ENCODE measurements at regions of chr11 and their contacts with region 1.

Region 1: GRCh38 chr11:120303004-120303637 is 22.0 kb upstream of the TLCD5 start:
- DNase-seq: peak in 1 of 2 experiments; percentile 67
- H3K4me3 ChIP-seq: no peak overlapping the region
- H3K27ac ChIP-seq: peak overlapping the region; percentile 77
- H3K4me1 ChIP-seq: peaks cover 78% of the 10 kb centered on the region
- H3K27me3 ChIP-seq: no peaks in the 10 kb centered on the region
- CTCF ChIP-seq: peak; percentile 87

Region 2: DNA sequence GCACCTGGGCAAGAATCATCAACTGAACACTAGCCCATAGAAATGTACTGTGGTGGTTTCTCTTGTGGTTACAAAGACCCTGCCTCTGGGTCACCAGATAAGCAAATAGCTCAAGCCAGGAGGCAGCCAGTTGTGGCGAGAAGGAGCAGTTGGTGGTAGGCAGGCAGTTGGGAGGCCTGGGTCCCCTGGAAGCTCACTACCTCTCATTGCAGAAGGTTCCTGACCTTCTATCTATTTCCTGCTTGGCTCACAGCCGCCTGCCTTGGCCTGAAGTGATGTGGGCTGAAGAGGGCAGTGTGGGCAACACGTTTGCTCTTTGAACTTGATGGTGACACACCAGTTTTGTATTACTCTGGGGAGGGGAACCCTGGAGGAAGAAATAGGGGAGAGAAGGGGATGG is 608.8 kb before region 1 on chr11:
- CTCF ChIA-PET with region 1: no interaction called
- POLR2A ChIA-PET with region 1: no interaction called
- intact Hi-C with region 1: loop called (anchors 10 kb)
- DNase-seq: peak; percentile 27 to 70
- H3K4me3 ChIP-seq: no peak overlapping the region
- H3K27ac ChIP-seq: peak overlapping the region; percentile 38; the same call in 1 of the 2 replicates
- H3K4me1 ChIP-seq: peaks cover 66% of the 10 kb centered on the region
- H3K27me3 ChIP-seq: no peaks in the 10 kb centered on the region
- CTCF ChIP-seq: peak; percentile 43; the same call in 1 of the 2 replicates

Region 3: DNA sequence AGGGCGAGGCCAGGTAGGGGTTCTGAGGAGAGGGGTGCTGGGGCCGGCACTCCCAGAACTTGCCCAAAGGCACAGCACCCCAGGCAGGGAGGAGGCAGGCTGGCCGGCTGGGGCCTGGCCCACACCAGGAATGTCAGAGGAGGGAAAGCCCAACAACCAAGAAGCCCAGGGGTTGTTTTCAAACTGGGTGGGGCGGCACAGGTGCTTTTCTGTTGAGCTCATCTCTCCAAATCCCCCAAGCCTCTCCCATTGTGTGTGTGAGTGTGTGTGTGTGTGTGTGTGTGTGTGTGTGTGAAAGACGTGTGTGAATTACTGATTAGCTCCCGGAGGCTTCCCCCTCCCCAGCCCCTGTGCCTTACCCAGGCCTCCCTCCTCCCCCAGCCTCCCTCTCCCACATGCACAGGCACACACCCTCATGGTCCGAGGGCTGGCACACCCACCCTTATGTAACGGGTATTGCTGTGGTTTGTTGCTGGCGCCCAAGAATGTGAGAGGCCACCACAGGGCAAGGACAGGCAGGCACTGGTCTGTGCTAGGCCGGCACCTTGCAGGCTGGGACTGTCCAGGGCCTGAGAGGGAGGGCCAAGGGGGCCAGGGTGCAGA is 181.1 kb before region 1 on chr11:
- CTCF ChIA-PET with region 1: no interaction called
- POLR2A ChIA-PET with region 1: interaction called, 5 read pairs
- intact Hi-C with region 1: loop called (anchors 1 kb)
- DNase-seq: peak; percentile 91 to 98
- H3K4me3 ChIP-seq: peak overlapping the region; percentile 47
- H3K27ac ChIP-seq: peak overlapping the region; percentile 98
- H3K4me1 ChIP-seq: peaks cover 61% of the 10 kb centered on the region
- H3K27me3 ChIP-seq: no peaks in the 10 kb centered on the region
- CTCF ChIP-seq: no peak

Region 4: DNA sequence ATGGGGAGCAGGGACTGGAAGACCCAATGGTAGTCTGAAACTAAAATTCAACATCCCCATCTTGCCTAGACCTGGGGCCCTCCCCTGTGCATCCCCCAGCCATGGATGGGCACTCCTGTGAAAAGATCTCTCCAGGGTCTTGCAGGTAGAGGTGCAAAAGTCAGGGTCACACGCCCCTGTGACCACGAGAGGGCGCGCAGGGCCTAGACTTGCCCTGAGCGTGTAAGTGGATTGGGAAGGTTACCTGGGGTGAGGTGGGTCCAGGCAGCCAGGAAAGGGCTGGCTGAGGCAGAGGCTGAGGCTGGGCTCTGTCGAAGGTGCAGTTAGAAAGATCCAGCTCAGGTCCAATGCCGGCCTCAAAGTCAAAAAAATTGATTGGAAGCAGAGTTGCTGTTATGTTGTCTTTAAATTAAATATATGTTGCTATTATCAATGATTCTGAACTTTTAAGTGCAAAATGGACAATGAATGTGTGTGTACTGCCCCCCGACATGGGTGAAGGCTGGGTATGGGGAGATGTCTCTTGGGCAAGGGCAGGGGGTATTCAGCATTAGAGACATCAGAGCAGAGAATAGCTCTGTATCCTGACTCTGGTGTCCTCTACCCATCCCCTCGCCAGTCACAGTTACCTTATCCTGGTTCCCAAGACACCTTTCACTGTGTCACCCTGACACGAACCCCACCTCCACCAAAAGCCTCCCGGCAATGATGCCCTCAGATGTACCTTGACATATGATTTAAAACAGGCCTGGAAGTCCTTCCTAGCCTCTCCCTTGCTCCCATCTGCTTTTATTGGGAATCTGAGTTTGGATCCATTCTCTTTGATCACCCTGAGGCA is 67.9 kb before region 1 on chr11:
- CTCF ChIA-PET with region 1: interaction called, 22 read pairs
- POLR2A ChIA-PET with region 1: interaction called, 4 read pairs
- intact Hi-C with region 1: loop called (anchors 1 kb)
- DNase-seq: peak; percentile 70 to 77
- H3K4me3 ChIP-seq: no peak overlapping the region
- H3K27ac ChIP-seq: no peak overlapping the region
- H3K4me1 ChIP-seq: peaks cover 15% of the 10 kb centered on the region
- H3K27me3 ChIP-seq: peaks cover 4% of the 10 kb centered on the region; the same call in 1 of the 2 replicates
- CTCF ChIP-seq: peak; percentile 97

Region 5: DNA sequence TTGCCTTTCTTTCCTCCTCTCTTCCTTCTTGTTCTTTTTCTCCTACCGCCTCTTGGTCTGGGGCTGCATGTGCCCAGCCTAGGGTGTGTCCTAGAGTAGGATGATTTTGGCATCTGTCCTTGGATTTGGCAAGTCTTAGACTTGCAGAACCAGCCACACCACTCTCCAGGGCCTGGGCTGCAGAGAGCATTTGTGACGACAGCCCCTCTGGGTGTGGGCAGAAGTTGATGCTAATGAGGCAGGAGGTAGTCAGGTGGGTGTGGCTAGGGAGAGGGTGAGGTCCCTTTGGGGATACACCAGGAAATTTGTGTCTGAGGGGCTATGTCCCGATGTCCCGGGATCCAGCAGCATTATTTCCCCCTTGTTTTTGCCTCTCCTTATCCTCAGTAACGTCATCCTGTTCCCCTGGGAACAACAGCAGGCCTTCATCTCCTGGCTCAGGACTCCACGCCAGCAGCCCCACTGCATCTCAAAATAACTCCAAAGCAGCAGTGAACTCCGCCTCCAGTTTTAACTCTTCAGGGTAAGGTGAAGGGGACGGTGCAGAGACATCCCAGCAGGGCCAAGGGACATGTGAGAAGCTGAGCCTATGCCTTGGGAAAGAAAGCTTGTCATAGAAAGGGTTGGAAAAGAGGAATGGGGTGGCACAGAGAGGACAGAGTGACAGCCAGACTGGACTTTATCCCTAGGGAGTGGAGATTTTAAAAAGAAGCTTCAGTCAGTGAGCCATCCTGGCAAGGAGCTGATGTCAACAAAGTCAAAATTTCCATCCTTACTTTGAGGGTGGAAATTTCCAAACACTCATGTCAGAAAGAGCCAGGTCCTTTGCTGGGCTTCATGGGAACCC is 13.9 kb after region 1 on chr11:
- CTCF ChIA-PET with region 1: interaction called, 5 read pairs
- POLR2A ChIA-PET with region 1: no interaction called
- intact Hi-C with region 1: loop called (anchors 2 kb)
- DNase-seq: peak; percentile 87 to 97
- H3K4me3 ChIP-seq: peak overlapping the region; percentile 28; the same call in 1 of the 2 replicates
- H3K27ac ChIP-seq: 0 out of 2 replicates have a peak overlapping the region, but pooled peaks have one; percentile 15
- H3K4me1 ChIP-seq: peaks cover 22% of the 10 kb centered on the region
- H3K27me3 ChIP-seq: no peaks in the 10 kb centered on the region
- CTCF ChIP-seq: no peak

Region 6: DNA sequence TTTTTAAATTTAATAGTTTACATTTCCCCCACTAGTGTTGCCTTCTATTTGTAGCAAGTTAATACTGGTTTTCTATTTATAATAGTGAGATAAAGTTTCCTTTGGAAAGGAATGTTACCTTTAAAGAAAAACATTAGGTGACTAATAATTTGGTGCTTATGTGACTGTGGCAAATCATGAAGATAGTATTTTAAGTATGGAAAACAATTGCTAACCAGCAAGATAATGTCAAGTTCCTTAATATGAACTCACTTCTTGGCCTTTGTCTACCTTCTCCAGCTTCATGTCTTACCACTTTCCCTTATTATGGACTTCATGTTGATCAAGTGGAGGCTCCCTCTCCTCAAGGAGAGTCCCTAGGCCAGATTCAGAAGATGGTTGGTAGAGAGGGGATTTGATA is 60.3 kb after region 1 on chr11:
- CTCF ChIA-PET with region 1: interaction called, 12 read pairs
- POLR2A ChIA-PET with region 1: no interaction called
- intact Hi-C with region 1: no loop called
- DNase-seq: no peak
- H3K4me3 ChIP-seq: no peak overlapping the region
- H3K27ac ChIP-seq: no peak overlapping the region
- H3K4me1 ChIP-seq: no peaks in the 10 kb centered on the region
- H3K27me3 ChIP-seq: no peaks in the 10 kb centered on the region
- CTCF ChIP-seq: no peak

Region 7: DNA sequence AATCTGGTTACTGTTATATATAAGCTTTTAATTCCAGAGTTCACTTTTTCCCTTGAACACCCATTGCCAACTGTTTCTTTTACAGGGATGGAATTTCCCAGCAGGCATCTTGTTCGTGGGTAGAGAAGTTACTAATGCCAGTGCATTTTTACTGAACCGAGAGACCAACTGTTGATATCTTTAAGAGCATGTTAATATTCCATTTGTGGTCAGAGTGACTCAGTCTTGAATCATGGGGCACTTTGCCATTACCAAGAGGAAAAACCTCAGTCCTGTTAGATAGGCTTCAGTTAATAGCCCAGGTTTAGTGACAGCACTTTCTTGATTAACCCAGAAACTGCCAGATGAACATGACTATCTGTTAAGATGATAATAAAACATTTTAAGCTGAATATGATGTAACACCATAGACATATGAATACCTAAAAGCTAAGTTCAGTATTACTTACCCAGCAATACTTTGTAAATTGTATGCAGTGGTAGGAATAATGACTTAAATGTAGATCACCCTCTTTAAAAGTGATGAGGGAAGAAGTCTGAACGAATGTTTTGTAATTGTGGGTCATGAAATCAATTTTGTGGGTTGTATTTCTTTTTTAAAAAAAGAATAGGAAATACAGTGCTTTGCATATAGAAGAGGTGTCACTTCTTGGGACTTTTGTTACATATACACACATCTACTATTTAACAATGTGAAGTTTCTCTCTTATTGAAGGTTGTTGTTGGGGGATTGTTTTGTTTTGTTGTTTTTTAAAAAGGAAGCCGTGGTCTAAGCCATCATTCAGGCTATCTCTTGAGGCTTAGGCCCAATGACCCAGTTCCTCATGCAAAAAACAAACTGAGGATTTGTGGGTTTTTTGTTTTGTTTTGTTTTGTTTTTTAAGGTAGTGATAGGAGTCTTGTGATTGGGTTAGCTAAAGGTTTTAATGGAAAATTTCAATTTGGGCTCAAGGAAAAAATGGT is 129.2 kb after region 1 on chr11:
- CTCF ChIA-PET with region 1: no interaction called
- POLR2A ChIA-PET with region 1: no interaction called
- intact Hi-C with region 1: loop called (anchors 1 kb)
- DNase-seq: peak; percentile 60 to 98
- H3K4me3 ChIP-seq: no peak overlapping the region
- H3K27ac ChIP-seq: peak overlapping the region; percentile 47
- H3K4me1 ChIP-seq: peaks cover 19% of the 10 kb centered on the region
- H3K27me3 ChIP-seq: no peaks in the 10 kb centered on the region
- CTCF ChIP-seq: no peak

Measured in PC-9 (cell line).